Caco-2 (cell line): ENCODE measurements at regions of chr6 and their contacts with region 1.

Region 1: DNA sequence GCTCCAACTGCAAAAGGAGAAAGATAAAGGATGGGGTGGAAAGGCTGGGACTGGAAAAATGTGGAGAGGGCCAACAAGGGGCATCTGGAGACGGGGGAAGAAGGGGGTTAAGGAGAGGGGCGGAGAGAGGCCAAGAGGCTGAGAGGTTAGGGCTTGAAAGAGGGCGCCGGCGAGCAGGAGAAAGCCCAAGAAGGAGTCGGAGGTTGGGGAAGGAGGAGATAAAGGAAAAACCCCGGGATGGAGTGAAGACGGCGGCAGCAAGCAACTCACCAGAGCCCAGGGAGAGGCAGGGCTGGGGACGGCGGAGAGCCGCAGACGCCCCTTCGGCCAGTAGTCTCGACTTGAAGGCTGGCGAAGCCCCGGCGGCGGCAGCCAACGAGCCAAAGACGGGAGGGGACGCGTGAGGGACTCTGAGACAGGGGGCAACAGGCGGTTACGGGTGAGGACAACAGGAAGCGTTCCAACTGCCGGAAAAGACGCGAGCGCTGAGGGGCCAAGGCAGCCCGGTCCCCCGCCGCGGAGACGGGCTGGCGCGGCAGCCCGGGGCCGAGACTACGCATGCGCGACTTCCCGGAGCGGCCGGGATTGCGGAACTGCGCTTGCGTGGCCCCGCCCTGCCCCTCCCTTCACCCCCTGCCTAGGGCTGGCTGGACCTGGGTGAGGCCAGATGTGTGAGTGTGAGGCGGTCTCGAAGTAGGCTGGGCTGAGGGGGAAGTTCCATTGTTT is at the start of gene STK38:
- DNase-seq: peak; percentile 89 to 90
- H3K4me3 ChIP-seq: peak within 1 kb of the TSS; percentile 75
- H3K4me3 Mint-ChIP-seq: peak within 1 kb of the TSS; percentile 99
- H3K27ac Mint-ChIP-seq: peak within 1 kb of the TSS; percentile 95
- H3K4me1 ChIP-seq: peaks cover 6% of the 10 kb centered on the region; the same call in 1 of the 2 replicates
- H3K4me1 Mint-ChIP-seq: peaks cover 8% of the 10 kb centered on the region
- H3K27me3 ChIP-seq: no peaks in the 10 kb centered on the region
- H3K27me3 Mint-ChIP-seq: no peaks in the 10 kb centered on the region
- CTCF ChIP-seq: peak in 1 of 2 experiments; percentile 19
- total RNA-seq, gene STK38: 27.5 and 30.8 TPM in 2 replicates

Region 2: DNA sequence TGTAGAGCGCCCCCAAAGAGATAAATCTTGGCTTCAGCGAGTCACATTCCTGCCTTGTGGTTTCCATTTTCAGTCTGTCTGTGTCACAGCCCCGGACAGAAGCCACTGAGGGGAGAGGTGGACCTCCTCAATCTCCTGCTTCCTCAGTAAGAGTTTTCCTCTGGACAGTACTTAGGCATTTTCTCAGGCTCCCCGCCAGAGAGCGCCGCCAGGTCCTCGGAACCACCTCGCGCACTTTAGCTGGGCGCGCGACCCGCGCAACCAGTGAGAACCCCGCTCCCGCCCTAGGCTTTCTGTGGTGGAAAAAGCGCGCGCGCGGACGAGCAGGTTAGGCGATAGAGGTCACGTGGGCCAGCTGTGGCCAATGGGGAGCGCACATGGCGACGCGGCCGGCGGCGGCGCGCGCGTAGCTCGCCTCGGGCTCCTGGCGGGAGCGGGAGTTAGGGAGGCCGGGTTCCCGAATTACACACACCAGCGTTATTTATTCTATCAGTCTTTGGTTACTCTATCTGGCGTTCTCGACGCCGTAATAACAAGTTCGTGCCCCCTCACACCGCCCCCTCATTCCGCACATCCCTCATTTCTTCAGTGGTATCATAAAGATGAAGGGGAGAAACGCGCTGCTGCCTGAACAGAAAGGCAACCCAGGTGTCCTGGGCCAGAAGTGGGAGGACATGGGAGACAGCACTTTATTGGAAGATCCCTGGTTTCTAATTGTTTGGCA is 123.8 kb before region 1 on chr6:
- CTCF ChIA-PET with region 1: no interaction called
- POLR2A ChIA-PET with region 1: no interaction called
- intact Hi-C with region 1: loop called (anchors 1 kb)
- DNase-seq: peak; percentile 99
- H3K4me3 ChIP-seq: peak overlapping the region; percentile 58
- H3K4me3 Mint-ChIP-seq: peak overlapping the region; percentile 81
- H3K27ac Mint-ChIP-seq: peak overlapping the region; percentile 82
- H3K4me1 ChIP-seq: peaks cover 22% of the 10 kb centered on the region
- H3K4me1 Mint-ChIP-seq: peaks cover 15% of the 10 kb centered on the region
- H3K27me3 ChIP-seq: no peaks in the 10 kb centered on the region
- H3K27me3 Mint-ChIP-seq: no peaks in the 10 kb centered on the region
- CTCF ChIP-seq: peak; percentile 56 to 76

Region 3: GRCh38 chr6:36436466-36436865 is 110.6 kb before region 1 on chr6:
- CTCF ChIA-PET with region 1: no interaction called
- POLR2A ChIA-PET with region 1: no interaction called
- intact Hi-C with region 1: no loop called
- DNase-seq: no peak
- H3K4me3 ChIP-seq: no peak overlapping the region
- H3K4me3 Mint-ChIP-seq: no peak overlapping the region
- H3K27ac Mint-ChIP-seq: no peak overlapping the region
- H3K4me1 ChIP-seq: peaks cover 28% of the 10 kb centered on the region
- H3K4me1 Mint-ChIP-seq: peaks cover 18% of the 10 kb centered on the region
- H3K27me3 ChIP-seq: no peaks in the 10 kb centered on the region
- H3K27me3 Mint-ChIP-seq: no peaks in the 10 kb centered on the region
- CTCF ChIP-seq: no peak

Region 4: DNA sequence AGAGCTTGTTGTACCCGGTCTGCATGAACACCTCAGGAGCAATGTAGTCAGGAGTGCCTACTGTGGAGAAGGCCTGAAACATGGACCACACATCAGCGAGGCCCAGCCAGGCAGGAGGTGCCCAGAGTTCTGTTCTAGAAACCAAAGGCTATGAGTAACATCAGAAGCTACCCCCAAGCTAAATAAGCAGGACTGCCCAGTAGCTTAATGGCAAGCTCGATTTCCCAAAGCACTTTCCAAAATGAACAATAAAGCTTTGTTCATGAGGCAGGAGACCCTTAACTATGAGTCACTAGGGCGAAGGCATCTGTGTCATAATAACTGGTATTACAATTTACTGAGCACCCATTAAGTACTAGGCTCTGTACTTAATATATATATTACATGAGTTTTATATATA is 47.2 kb before region 1 on chr6:
- CTCF ChIA-PET with region 1: interaction called, 12 read pairs
- POLR2A ChIA-PET with region 1: no interaction called
- intact Hi-C with region 1: no loop called
- DNase-seq: no peak
- H3K4me3 ChIP-seq: no peak overlapping the region
- H3K4me3 Mint-ChIP-seq: no peak overlapping the region
- H3K27ac Mint-ChIP-seq: no peak overlapping the region
- H3K4me1 ChIP-seq: peaks cover 8% of the 10 kb centered on the region; the same call in 1 of the 2 replicates
- H3K4me1 Mint-ChIP-seq: no peaks in the 10 kb centered on the region
- H3K27me3 ChIP-seq: no peaks in the 10 kb centered on the region
- H3K27me3 Mint-ChIP-seq: no peaks in the 10 kb centered on the region
- CTCF ChIP-seq: no peak

Region 5: DNA sequence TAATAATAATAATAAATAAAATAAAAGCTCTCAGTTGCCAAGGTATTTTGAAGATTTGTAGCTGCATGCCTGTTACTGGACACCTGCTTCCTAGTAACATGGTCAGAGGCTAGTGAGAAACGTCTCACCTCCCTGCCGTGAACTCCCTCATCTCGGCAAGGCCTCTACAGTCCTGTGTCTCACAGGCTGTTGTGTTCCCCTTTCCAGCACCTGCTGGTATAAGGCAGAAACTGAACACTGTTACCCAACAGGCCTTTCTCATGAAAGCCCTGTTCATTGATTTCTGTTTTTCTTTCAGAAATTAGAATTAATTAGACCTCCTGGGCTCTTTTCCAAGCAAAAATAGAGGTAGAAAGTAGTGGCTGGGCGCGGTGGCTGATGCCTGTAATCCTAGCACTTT is 29.5 kb after region 1 on chr6:
- CTCF ChIA-PET with region 1: interaction called, 8 read pairs
- POLR2A ChIA-PET with region 1: no interaction called
- intact Hi-C with region 1: loop called (anchors 2 kb)
- DNase-seq: no peak
- H3K4me3 ChIP-seq: no peak overlapping the region
- H3K4me3 Mint-ChIP-seq: no peak overlapping the region
- H3K27ac Mint-ChIP-seq: peak overlapping the region; percentile 89
- H3K4me1 ChIP-seq: peaks cover 38% of the 10 kb centered on the region
- H3K4me1 Mint-ChIP-seq: peaks cover 23% of the 10 kb centered on the region
- H3K27me3 ChIP-seq: no peaks in the 10 kb centered on the region
- H3K27me3 Mint-ChIP-seq: no peaks in the 10 kb centered on the region
- CTCF ChIP-seq: no peak

Region 6: DNA sequence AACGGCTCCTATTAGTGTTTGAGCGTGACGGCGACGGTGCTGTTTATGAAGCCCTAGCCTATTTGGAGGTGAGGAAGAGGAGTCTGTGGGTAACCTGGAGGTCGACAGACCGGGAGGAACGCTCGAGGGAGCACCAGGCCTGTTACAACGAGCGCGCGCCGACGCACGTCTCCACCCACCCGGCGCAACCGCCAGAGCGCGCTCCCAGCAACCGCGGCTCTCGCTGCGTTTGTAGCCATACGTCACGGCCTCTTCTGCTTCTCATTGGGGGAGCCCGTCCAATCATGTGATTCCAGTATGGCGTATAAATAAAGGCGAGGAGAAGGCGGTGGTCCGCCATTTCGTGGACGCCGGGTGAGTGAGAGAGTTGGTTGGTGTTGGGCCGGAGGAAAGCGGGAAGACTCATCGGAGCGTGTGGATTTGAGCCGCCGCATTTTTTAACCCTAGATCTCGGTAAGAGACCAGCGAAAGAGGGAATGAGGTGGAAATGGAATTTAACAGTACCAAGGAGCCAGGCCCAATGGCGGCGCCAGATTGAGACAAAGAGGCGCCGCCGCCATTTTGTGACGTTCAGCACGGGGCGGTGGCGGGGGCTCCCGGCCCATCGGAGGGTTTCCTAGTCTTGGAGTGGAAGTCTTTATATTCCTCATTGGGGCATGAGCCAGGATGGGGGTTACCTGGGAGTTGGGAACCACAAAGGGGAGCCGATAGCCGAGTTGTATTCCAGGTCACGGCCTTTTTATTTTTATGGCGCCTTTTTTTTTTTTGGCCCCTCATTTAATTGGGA is 47.1 kb after region 1 on chr6 and contains the start of gene SRSF3:
- CTCF ChIA-PET with region 1: no interaction called
- POLR2A ChIA-PET with region 1: no interaction called
- intact Hi-C with region 1: loop called (anchors 2 kb)
- DNase-seq: peak; percentile 97
- H3K4me3 ChIP-seq: peak within 1 kb of the TSS; percentile 53
- H3K4me3 Mint-ChIP-seq: peak within 1 kb of the TSS; percentile 81
- H3K27ac Mint-ChIP-seq: peak within 1 kb of the TSS; percentile 97
- H3K4me1 ChIP-seq: peaks cover 16% of the 10 kb centered on the region
- H3K4me1 Mint-ChIP-seq: peaks cover 7% of the 10 kb centered on the region
- H3K27me3 ChIP-seq: no peaks in the 10 kb centered on the region
- H3K27me3 Mint-ChIP-seq: peaks cover 3% of the 10 kb centered on the region
- CTCF ChIP-seq: peak; percentile 40 to 51
- total RNA-seq, gene SRSF3: 422 and 425 TPM in 2 replicates

Region 7: GRCh38 chr6:36724514-36725390 is 177.7 kb after region 1 on chr6:
- CTCF ChIA-PET with region 1: no interaction called
- POLR2A ChIA-PET with region 1: no interaction called
- intact Hi-C with region 1: no loop called
- DNase-seq: peak; percentile 74 to 80
- H3K4me3 ChIP-seq: no peak overlapping the region
- H3K4me3 Mint-ChIP-seq: no peak overlapping the region
- H3K27ac Mint-ChIP-seq: no peak overlapping the region
- H3K4me1 ChIP-seq: no peaks in the 10 kb centered on the region
- H3K4me1 Mint-ChIP-seq: peaks cover 7% of the 10 kb centered on the region
- H3K27me3 ChIP-seq: no peaks in the 10 kb centered on the region
- H3K27me3 Mint-ChIP-seq: no peaks in the 10 kb centered on the region
- CTCF ChIP-seq: peak; percentile 42 to 76

Region 8: GRCh38 chr6:37190159-37190535 is 643.1 kb after region 1 on chr6:
- CTCF ChIA-PET with region 1: no interaction called
- POLR2A ChIA-PET with region 1: no interaction called
- intact Hi-C with region 1: no loop called
- DNase-seq: no peak
- H3K4me3 ChIP-seq: no peak overlapping the region
- H3K4me3 Mint-ChIP-seq: no peak overlapping the region
- H3K27ac Mint-ChIP-seq: no peak overlapping the region
- H3K4me1 ChIP-seq: peaks cover 4% of the 10 kb centered on the region; the same call in 1 of the 2 replicates
- H3K4me1 Mint-ChIP-seq: peaks cover 7% of the 10 kb centered on the region
- H3K27me3 ChIP-seq: no peaks in the 10 kb centered on the region
- H3K27me3 Mint-ChIP-seq: no peaks in the 10 kb centered on the region
- CTCF ChIP-seq: no peak